Mammary epithelial cell (primary cell): ENCODE measurements at regions of chr3 and their contacts with region 1.

Region 1: GRCh38 chr3:10804183-10804648 is 11.8 kb upstream of the SLC6A11 start:
- DNase-seq: peak; percentile 99
- H3K4me3 ChIP-seq: no peak overlapping the region
- H3K27ac ChIP-seq: peak overlapping the region; percentile 92
- H3K4me1 ChIP-seq: peaks cover 36% of the 10 kb centered on the region
- H3K27me3 ChIP-seq: no peaks in the 10 kb centered on the region
- CTCF ChIP-seq: peak in 1 of 2 donors; percentile 2

Region 2: DNA sequence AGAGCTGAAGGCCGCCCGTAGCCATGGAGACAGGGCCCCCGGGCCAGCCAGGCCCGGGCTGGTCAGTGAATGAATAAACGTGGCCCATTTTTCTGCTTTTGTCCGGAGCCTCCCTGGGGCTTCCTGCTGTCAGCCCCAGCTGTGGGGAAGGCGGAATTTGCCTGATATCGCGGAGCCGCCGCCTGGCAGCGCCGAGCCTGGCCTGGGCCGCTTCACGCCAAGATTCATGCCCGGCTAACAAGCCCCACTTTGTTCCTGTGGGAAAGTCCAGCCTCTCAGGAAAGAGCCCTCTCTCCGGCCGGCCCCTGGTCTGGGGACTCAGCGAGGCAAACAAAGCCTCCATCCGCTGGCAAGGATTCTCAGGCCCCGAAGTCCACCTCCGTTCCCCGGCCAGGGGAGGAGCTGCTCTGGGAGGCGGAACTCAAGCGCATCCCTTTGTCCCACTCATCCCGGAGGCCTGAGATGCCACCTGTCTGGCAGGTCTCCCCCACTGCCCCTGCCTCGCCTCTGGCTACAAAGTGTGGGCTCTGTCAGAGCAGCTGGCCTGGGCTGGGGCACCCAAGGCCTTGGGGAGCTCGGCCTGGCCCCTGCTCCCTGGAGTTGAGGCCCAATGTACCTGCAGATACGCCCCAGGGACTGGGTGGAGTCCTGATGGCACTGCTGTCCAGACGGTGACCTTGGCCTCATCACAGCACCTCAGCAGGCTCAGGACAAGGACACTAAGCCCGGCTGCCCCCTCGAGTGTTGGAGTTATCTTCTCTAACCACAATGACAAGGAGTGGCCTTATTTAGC is 39.8 kb before region 1 on chr3:
- CTCF ChIA-PET with region 1: no interaction called
- dilution Hi-C with region 1: loop called (anchors 5 kb)
- in situ Hi-C with region 1: no loop called
- intact Hi-C with region 1: no loop called
- DNase-seq: no peak
- H3K4me3 ChIP-seq: no peak overlapping the region
- H3K27ac ChIP-seq: no peak overlapping the region
- H3K4me1 ChIP-seq: no peaks in the 10 kb centered on the region
- H3K27me3 ChIP-seq: no peaks in the 10 kb centered on the region
- CTCF ChIP-seq: no peak

Region 3: GRCh38 chr3:10780225-10780624 is 24.0 kb before region 1 on chr3:
- CTCF ChIA-PET with region 1: interaction called, 3 read pairs
- dilution Hi-C with region 1: no loop called
- in situ Hi-C with region 1: no loop called
- intact Hi-C with region 1: loop called (anchors 2 kb)
- DNase-seq: peak; percentile 82
- H3K4me3 ChIP-seq: no peak overlapping the region
- H3K27ac ChIP-seq: no peak overlapping the region
- H3K4me1 ChIP-seq: peaks cover 24% of the 10 kb centered on the region
- H3K27me3 ChIP-seq: no peaks in the 10 kb centered on the region
- CTCF ChIP-seq: no peak

Region 4: GRCh38 chr3:10841100-10841499 is 36.9 kb after region 1 on chr3:
- CTCF ChIA-PET with region 1: no interaction called
- dilution Hi-C with region 1: loop called (anchors 5 kb)
- in situ Hi-C with region 1: no loop called
- intact Hi-C with region 1: no loop called
- DNase-seq: no peak
- H3K4me3 ChIP-seq: no peak overlapping the region
- H3K27ac ChIP-seq: no peak overlapping the region
- H3K4me1 ChIP-seq: no peaks in the 10 kb centered on the region
- H3K27me3 ChIP-seq: no peaks in the 10 kb centered on the region
- CTCF ChIP-seq: no peak

Region 5: DNA sequence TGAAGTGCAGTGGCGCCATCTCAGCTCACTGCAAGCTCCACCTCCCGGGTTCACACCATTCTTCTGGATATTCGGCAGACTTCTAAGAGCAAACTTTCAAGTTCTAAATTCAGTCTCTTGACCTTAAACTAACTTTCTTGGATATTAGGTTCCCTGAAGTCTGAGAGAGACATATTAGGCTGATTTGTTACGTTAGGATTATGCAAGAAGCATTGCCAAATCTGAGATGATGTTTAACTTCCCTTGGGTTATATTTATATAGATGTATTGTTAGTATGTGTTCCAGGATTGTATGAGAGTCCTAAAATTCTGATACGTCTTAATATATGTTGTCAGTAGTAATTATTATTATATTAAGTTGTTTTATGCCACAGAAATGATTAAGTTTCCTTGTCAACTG is 268.4 kb after region 1 on chr3:
- CTCF ChIA-PET with region 1: no interaction called
- dilution Hi-C with region 1: no loop called
- in situ Hi-C with region 1: no loop called
- intact Hi-C with region 1: no loop called
- DNase-seq: no peak
- H3K4me3 ChIP-seq: no peak overlapping the region
- H3K27ac ChIP-seq: no peak overlapping the region
- H3K4me1 ChIP-seq: peaks cover 3% of the 10 kb centered on the region
- H3K27me3 ChIP-seq: no peaks in the 10 kb centered on the region
- CTCF ChIP-seq: no peak

Region 6: DNA sequence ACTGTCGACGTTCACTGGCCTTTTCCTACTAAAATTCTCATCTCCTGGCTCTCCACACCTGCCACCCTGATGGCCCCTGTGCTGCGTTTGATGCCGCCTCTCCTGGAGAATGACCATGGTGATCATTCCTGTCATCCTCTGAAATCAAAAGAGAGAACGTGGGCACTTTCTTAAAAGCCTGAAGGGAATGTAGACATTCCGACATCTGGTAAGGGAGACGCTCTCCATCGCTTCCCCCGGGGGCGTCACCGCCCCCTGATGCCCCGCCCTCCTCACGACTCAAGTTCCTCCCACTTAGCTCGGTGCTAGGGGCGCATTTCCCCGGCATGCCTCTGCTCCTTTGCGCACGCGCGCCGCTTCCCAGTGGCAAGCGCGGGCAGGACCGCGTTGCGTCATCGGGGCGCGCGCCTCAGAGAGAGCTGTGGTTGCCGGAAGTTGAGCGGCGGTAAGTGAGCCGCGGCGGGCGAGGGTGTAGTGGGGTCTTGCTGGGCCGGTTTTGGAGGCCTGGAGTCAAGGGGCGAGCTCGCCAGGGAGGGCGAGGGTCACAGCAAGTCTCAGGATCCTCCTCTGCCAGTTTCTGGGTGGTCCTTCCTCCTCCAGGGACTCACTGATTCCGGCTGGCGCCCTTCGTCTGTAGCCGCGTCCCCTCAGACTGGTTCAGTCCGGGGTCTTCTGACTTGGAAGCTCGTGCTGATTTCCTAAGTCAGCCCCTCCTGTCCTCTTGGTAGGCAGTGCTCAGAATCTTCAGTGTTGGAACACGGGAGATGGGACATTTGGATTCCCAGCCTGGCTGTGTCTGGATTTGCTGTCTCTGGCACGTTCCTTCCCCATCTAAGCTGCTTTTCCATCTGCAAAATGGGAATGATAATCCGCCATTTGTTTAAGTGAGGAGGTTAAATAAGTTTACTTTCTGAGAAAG is 468.0 kb after region 1 on chr3 and contains the start of gene ATG7:
- CTCF ChIA-PET with region 1: no interaction called
- dilution Hi-C with region 1: no loop called
- in situ Hi-C with region 1: no loop called
- intact Hi-C with region 1: loop called (anchors 5 kb)
- DNase-seq: peak; percentile 92
- H3K4me3 ChIP-seq: peak within 1 kb of the TSS; percentile 83 to 91 (median 91)
- H3K27ac ChIP-seq: peak within 1 kb of the TSS; percentile 96
- H3K4me1 ChIP-seq: peaks cover 13% of the 10 kb centered on the region
- H3K27me3 ChIP-seq: no peaks in the 10 kb centered on the region
- CTCF ChIP-seq: peak in 1 of 2 donors; percentile 12
- total RNA-seq, gene ATG7: 35.3 to 51.2 TPM